Heart right ventricle (tissue), 16 donors: ENCODE measurements at regions of chr1 and their contacts with region 1.

Region 1: DNA sequence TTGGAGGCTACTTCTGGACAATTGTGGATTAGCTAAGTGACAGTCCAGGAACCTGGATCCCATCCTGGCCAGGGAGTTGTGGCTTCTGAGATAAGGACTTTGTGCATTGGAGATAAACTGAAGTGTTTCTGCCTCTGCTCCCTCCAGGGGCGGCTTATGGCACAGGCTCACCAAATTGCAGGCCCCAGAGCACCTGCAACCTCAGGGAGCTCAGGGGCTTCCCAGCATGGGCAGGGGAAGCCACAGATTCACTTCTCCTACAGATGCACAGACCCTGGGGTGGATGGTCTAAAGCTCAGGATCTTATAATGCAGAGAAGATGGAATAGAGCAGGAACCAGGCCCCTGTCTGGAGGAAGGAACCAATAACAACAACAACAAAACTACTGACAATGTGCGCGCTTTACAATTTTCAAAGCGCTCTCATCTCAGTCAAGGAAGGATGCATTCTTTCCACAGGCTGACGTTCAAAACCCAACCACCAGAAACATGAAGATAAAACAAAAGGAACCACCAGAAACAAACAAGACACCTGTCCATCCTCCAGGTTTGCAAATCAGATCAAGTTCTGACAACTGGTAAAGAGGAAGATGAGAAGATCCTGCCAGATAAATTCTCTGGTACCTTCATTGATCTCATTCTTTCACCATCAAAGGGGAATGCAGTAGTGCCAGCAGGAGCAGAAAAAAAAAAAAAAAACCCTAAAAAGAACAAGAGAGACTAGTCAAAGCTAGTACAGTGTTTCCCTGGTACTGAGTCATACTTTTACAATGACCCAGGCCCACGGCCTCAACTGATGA is 121.0 kb upstream of the IRF2BP2 start:
- DNase-seq: no peak
- ATAC-seq: no peak
- H3K4me3 ChIP-seq: no peak overlapping the region
- H3K27ac ChIP-seq: peak overlapping the region in 1 of 10 donors; percentile 62
- H3K4me1 ChIP-seq: peaks cover 17 to 54% (median 32%) of the 10 kb centered on the region in 9 donors
- H3K27me3 ChIP-seq: no peaks in the 10 kb centered on the region
- CTCF ChIP-seq: no peak

Region 2: DNA sequence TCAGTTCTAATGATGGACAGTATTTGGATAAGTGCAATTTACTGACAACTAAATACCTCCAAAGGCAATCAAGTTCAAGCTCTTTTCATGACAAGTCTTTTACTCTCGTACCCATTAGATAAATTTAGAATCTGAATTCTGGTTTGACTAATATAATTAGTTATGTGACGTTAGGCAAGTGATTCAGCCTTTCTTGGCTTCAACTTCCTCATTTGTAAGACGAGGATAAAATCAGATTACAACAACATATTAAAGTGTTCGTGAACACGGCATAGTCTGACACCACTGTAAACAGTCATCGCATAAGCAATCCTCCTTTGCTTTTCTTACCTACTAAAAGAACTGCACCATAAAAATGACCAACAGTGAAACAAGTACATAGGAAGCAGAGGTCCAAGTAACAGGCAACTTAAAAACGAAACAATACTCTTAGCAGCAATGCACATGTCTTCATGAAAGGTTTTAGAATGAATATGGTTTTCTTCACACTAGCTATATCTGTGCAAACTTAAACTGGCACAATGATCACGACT is 332.1 kb before region 1 on chr1:
- intact Hi-C with region 1: no loop called
- DNase-seq: no peak
- ATAC-seq: peak in 1 of 8 donors; percentile 47
- H3K4me3 ChIP-seq: peak overlapping the region in 1 of 10 donors; percentile 45
- H3K27ac ChIP-seq: peak overlapping the region in 1 of 10 donors; percentile 86
- H3K4me1 ChIP-seq: peaks cover 0 to 42% (median 0%) of the 10 kb centered on the region in 9 donors
- H3K27me3 ChIP-seq: no peaks in the 10 kb centered on the region
- CTCF ChIP-seq: no peak

Region 3: DNA sequence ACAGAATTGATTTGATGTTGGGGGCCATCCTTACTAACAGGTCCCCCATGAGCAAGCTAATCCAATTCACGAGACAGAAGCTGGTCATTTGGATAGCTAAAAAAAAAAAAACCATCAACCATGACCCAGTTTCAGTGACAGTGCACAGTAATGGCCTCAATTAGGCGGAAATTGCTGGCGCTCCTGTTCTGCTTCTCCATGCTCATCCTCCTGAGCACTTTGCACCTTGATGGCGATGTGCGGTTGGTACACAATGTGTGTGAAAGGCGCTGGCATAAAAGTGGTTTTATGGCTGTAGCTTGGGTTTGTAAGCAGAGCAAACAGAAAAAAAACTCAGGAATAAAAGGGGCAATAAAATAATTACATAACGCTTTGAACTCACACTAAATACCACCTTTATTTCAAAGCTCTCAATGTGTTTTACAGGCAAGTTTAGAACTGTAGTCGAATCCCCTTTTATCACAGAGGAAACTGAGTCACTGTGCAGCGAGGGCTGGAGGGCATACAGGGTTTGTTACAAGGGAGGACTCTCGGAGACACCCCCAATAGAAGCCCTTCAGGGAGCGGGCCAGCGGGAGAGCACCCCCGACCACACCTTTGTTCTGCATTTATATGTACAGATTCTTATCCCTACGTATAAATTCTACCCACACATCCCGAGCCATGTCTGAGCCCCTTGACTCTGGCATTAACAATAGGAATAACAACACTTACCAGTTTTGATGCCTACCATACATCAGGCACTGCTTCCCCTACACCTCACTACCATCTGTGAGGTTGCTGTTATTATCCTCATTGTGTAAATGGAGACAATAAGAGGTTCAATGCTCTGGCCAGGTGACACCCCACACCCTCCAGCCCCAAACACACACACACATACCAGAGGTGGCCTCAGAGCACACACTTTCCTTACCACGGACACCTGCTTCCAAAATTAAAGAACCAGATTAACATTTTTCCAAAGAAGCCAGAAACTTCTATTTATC is 92.5 kb after region 1 on chr1:
- intact Hi-C with region 1: loop called in 1 of 10 experiments (anchors 10 kb)
- DNase-seq: no peak
- ATAC-seq: no peak
- H3K4me3 ChIP-seq: no peak overlapping the region
- H3K27ac ChIP-seq: no peak overlapping the region
- H3K4me1 ChIP-seq: no peaks in the 10 kb centered on the region
- H3K27me3 ChIP-seq: no peaks in the 10 kb centered on the region
- CTCF ChIP-seq: no peak

Region 4: DNA sequence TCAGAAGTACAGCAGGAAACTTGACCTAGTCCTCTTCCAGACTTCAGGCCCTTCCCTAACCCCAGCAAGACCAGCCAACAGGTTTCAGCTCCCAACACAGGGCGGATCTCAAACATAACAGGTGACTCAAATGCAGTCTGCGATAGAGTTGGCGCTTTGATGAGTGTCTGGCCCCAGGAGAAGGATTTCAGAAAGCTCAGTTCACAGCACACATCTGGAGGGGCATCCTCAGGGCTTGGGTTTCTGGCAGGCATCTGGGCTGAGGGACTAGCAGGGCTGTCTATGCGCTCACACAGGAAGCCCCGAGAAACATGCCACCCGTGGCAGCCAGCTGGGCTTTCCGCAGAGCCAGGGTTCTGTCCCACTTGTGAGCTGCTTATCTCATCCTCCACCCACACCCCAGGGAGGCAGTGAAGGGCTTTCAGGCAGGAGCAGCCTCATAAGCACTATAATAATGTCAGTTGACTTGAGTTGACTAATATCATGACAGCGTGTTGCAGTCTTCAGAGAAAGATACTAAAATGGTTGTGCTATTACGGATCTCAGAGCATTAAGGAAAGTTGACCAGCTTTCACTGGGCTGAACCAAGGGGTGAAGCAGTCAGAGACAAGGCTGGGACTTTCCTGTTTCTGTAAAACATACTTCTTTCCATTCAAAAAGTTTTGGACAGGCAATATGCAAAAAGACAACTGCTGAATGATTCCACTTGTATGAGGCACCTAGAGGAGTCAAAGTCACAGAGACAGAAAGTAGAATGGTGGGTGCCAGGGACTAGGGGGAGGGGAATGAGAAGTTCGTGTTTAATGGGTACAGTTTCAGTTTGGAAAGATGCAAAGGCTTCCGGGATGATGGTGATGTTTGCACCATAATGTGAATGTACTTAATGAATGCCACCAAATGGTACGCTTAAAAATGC is 112.0 kb after region 1 on chr1:
- intact Hi-C with region 1: loop called in 2 of 10 experiments (anchors 10 kb)
- DNase-seq: peak; percentile 34 to 66
- ATAC-seq: peak; percentile 22 to 82 (median 64)
- H3K4me3 ChIP-seq: no peak overlapping the region
- H3K27ac ChIP-seq: peak overlapping the region in 8 of 10 donors; percentile 20 to 85 (median 54)
- H3K4me1 ChIP-seq: peaks cover 7 to 79% (median 31%) of the 10 kb centered on the region in 9 donors
- H3K27me3 ChIP-seq: no peaks in the 10 kb centered on the region
- CTCF ChIP-seq: no peak

Region 5: GRCh38 chr1:234851450-234852438 is 120.8 kb after region 1 on chr1:
- intact Hi-C with region 1: loop called in 4 of 10 experiments (anchors 10 kb)
- DNase-seq: no peak
- ATAC-seq: peak in 7 of 8 donors; percentile 34 to 71 (median 47)
- H3K4me3 ChIP-seq: no peak overlapping the region
- H3K27ac ChIP-seq: peak overlapping the region in 1 of 10 donors; percentile 82
- H3K4me1 ChIP-seq: peaks cover 0 to 57% (median 3%) of the 10 kb centered on the region in 9 donors
- H3K27me3 ChIP-seq: no peaks in the 10 kb centered on the region
- CTCF ChIP-seq: no peak

Region 6: DNA sequence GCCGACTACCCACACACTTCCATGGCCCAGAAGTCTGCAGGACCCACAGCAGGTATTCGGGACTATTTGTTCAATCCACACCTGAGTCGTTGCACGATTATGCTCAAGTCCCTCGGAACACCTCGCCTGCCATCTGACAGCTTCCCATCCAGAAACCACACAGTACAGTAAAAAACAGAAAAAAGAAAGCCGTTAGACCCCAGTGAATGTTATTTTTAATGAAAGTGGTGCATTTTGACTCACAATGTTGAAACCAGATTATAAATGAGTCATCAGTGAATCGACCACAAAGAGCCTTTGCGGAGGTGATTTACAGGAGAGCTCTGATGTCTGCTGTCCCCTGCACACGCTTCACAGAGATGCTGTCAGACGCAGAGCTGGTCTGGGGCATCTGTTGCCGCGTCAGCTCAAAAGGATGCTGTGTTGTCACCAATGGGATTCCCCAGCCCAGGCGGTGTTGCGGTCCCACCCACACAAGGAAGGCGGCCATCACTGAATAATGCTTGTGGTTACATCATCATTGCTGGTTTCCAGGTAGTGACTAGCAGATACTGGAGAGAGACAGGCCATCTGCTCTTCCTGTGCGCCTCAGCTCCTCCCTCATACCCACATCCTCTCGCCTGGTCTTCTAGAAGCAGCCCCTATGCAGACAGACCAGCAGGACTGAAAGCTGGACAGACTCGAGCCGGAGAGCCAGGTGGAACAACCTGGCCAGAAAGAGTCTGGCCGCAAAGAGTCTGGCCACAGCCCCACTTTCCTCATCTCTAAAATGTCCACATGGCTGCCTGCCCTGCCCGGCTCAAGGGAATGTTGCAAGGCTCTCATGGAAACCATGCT is 280.8 kb after region 1 on chr1:
- intact Hi-C with region 1: no loop called
- DNase-seq: peak; percentile 45 to 72
- ATAC-seq: peak; percentile 68 to 94 (median 80)
- H3K4me3 ChIP-seq: peak overlapping the region in 1 of 10 donors; percentile 6
- H3K27ac ChIP-seq: peak overlapping the region in 9 of 10 donors; percentile 16 to 88 (median 62)
- H3K4me1 ChIP-seq: peaks cover 3 to 41% (median 17%) of the 10 kb centered on the region in 9 donors
- H3K27me3 ChIP-seq: no peaks in the 10 kb centered on the region
- CTCF ChIP-seq: no peak